Head of caudate nucleus (tissue), 42 donors: ENCODE measurements at regions of chr5 and their contacts with region 1.

Region 1: GRCh38 chr5:127492854-127493738 is 24.3 kb upstream of the PRRC1 start:
- DNase-seq: peak in 1 of 42 donors; percentile 24

Region 2: GRCh38 chr5:127014573-127014972 is 478.5 kb before region 1 on chr5:
- intact Hi-C with region 1: no loop called
- DNase-seq: no peak

Region 3: GRCh38 chr5:127290019-127290945 is 202.8 kb before region 1 on chr5 and contains the start of gene MEGF10:
- intact Hi-C with region 1: loop called (anchors 5 kb)
- DNase-seq: peak; percentile 65 to 93 (median 86)

Region 4: DNA sequence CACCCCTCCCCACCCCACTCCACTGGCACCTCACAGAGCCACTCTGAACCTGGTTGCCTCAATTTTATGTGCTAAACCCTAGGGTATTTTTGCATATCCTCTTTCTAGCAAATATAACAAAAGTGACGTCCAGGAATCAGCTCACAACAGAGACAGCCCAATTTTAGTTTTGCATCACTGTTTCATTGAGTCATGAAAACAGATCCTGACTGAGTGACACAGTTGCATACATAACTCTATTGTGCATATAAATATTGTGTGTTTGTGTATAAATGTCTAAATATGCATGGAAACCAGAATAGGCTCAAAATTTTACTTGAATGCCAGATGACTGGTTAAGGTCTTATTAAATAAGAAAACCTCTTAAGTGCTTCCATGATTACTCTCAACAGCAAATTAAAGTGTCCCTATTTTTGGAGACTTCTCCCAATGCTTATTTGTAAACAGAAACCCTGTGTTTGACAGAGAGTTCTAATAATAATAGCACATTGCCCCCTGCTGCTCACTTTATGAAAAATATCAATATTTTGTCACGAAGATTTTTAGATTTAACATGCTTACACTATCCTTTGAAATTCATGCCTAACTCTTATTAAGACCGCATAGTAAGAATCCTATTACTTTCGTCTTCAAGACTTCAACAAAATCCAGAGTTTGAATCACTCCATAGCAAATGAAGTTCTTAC is 51.2 kb before region 1 on chr5:
- intact Hi-C with region 1: loop called (anchors 10 kb)
- DNase-seq: peak in 3 of 42 donors; percentile 28 to 55 (median 54)